Activated CD4-positive, alpha-beta T cell treated with anti-CD3 and anti-CD28 coated beads for 36 hours (primary cell): ENCODE measurements at regions of chr10 and their contacts with region 1.

Region 1: GRCh38 chr10:14812271-14812670 is 25.6 kb downstream of the CDNF start:
- DNase-seq: no peak
- ATAC-seq: peak; percentile 59
- H3K4me3 Mint-ChIP-seq: peak overlapping the region; percentile 23
- H3K27ac Mint-ChIP-seq: no peak overlapping the region
- H3K4me1 Mint-ChIP-seq: peaks cover 25% of the 10 kb centered on the region
- H3K27me3 Mint-ChIP-seq: no peaks in the 10 kb centered on the region

Region 2: DNA sequence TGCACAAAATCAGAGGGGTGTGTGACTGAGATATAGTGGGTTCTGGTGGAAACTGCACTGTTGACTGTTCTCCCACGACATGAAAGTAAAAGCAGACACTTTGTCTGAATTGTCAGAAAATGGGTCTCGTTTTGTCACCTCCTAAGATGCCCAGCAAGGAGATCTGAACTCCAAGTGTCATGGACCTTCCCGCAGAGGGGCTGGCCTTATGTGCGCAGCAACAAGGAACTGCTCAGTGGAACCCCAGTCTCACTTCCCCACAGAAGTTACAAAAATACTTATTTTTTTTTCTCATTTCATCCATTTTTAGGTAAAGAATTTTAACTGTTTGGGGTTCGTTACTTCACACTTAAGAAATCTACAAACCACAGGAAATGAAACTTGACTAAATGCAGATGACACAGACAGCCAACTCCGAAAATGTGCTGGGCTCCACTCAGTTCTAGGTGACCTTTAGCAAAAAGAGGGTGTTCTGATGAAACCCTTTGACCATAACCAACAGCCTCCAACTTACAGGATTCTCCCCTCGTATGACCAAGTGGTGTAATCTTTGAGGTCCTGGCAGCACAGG is 152.6 kb before region 1 on chr10:
- CTCF ChIA-PET with region 1: no interaction called
- POLR2A ChIA-PET with region 1: no interaction called
- intact Hi-C with region 1: loop called in 1 of 2 experiments (anchors 5 kb)
- DNase-seq: peak; percentile 71
- ATAC-seq: peak; percentile 80
- H3K4me3 Mint-ChIP-seq: peak overlapping the region; percentile 60
- H3K27ac Mint-ChIP-seq: peak overlapping the region; percentile 92
- H3K4me1 Mint-ChIP-seq: peaks cover 82% of the 10 kb centered on the region
- H3K27me3 Mint-ChIP-seq: no peaks in the 10 kb centered on the region

Region 3: GRCh38 chr10:14727465-14727864 is 84.8 kb before region 1 on chr10:
- CTCF ChIA-PET with region 1: no interaction called
- POLR2A ChIA-PET with region 1: no interaction called
- intact Hi-C with region 1: no loop called
- DNase-seq: no peak
- ATAC-seq: no peak
- H3K4me3 Mint-ChIP-seq: no peak overlapping the region
- H3K27ac Mint-ChIP-seq: no peak overlapping the region
- H3K4me1 Mint-ChIP-seq: peaks cover 31% of the 10 kb centered on the region
- H3K27me3 Mint-ChIP-seq: no peaks in the 10 kb centered on the region